Naive thymus-derived CD4-positive, alpha-beta T cell (primary cell): ENCODE measurements at regions of chr6 and their contacts with region 1.

Region 1: GRCh38 chr6:107786709-107787588 is 37.2 kb downstream of the SCML4 start:
- DNase-seq: peak in 7 of 9 donors; percentile 51 to 80 (median 65)
- ATAC-seq: peak; percentile 87
- H3K4me3 ChIP-seq: peak overlapping the region; percentile 34
- H3K4me3 Mint-ChIP-seq: peak overlapping the region; percentile 74 to 88 (median 82)
- H3K27ac ChIP-seq: peak overlapping the region; percentile 70
- H3K27ac Mint-ChIP-seq: peak overlapping the region; percentile 83 to 97 (median 95)
- H3K4me1 ChIP-seq: peaks cover 51 to 78% of the 10 kb centered on the region in 2 donors
- H3K4me1 Mint-ChIP-seq: peaks cover 65 to 92% (median 90%) of the 10 kb centered on the region in 7 donors
- H3K27me3 ChIP-seq: no peaks in the 10 kb centered on the region
- H3K27me3 Mint-ChIP-seq: peaks cover 0 to 6% (median 0%) of the 10 kb centered on the region in 5 donors

Region 2: GRCh38 chr6:107740496-107741190 is 46.3 kb before region 1 on chr6:
- CTCF ChIA-PET with region 1: interaction called, 5 read pairs
- POLR2A ChIA-PET with region 1: interaction called, 140 read pairs
- intact Hi-C with region 1: loop called (anchors 1 kb)
- DNase-seq: peak in 7 of 9 donors; percentile 35 to 48 (median 42)
- ATAC-seq: peak; percentile 43
- H3K4me3 ChIP-seq: peak overlapping the region; percentile 48
- H3K4me3 Mint-ChIP-seq: peak overlapping the region; percentile 72 to 90 (median 82)
- H3K27ac ChIP-seq: peak overlapping the region; percentile 73
- H3K27ac Mint-ChIP-seq: peak overlapping the region; percentile 85 to 98 (median 95)
- H3K4me1 ChIP-seq: peaks cover 54 to 65% of the 10 kb centered on the region in 2 donors
- H3K4me1 Mint-ChIP-seq: peaks cover 47 to 92% (median 86%) of the 10 kb centered on the region in 7 donors
- H3K27me3 ChIP-seq: no peaks in the 10 kb centered on the region
- H3K27me3 Mint-ChIP-seq: no peaks in the 10 kb centered on the region

Region 3: DNA sequence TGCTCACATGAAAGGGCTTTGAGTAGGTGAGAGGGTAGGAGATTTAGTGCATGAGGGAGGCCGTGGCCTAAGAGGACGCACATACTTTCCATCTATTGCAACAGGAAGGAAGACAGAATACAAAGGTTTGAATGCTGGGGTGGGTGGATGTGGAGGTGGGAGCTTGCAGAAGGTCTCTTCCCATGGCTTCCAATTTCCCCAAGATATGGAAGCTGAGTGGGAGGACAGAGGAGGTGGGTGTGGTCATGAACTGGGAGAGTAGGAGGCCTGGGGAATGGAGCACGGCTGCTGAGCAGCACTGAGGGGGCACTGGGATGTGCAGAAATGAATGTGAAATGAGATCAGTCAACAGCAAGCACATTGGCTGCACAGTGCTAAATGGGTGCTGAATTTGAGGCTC is 33.2 kb before region 1 on chr6:
- CTCF ChIA-PET with region 1: interaction called, 3 read pairs
- POLR2A ChIA-PET with region 1: interaction called, 20 read pairs
- intact Hi-C with region 1: no loop called
- DNase-seq: peak in 2 of 9 donors; percentile 6 to 12
- ATAC-seq: no peak
- H3K4me3 ChIP-seq: no peak overlapping the region
- H3K4me3 Mint-ChIP-seq: peak overlapping the region; percentile 3 to 76 (median 57)
- H3K27ac ChIP-seq: no peak overlapping the region
- H3K27ac Mint-ChIP-seq: peak overlapping the region in 8 of 9 donors; percentile 66 to 90 (median 84)
- H3K4me1 ChIP-seq: peaks cover 21 to 25% of the 10 kb centered on the region in 2 donors
- H3K4me1 Mint-ChIP-seq: peaks cover 33 to 93% (median 84%) of the 10 kb centered on the region in 7 donors
- H3K27me3 ChIP-seq: no peaks in the 10 kb centered on the region
- H3K27me3 Mint-ChIP-seq: no peaks in the 10 kb centered on the region

Region 4: GRCh38 chr6:107770541-107770940 is 16.4 kb before region 1 on chr6:
- CTCF ChIA-PET with region 1: interaction called, 3 read pairs
- POLR2A ChIA-PET with region 1: interaction called, 8 read pairs
- intact Hi-C with region 1: loop called in 1 of 2 experiments (anchors 2 kb)
- DNase-seq: no peak
- ATAC-seq: no peak
- H3K4me3 ChIP-seq: no peak overlapping the region
- H3K4me3 Mint-ChIP-seq: peak overlapping the region in 1 of 10 donors; percentile 12
- H3K27ac ChIP-seq: no peak overlapping the region
- H3K27ac Mint-ChIP-seq: peak overlapping the region in 3 of 9 donors; percentile 31 to 63 (median 50)
- H3K4me1 ChIP-seq: peaks cover 0 to 5% of the 10 kb centered on the region in 2 donors
- H3K4me1 Mint-ChIP-seq: peaks cover 0 to 77% (median 49%) of the 10 kb centered on the region in 7 donors
- H3K27me3 ChIP-seq: no peaks in the 10 kb centered on the region
- H3K27me3 Mint-ChIP-seq: no peaks in the 10 kb centered on the region

Region 5: DNA sequence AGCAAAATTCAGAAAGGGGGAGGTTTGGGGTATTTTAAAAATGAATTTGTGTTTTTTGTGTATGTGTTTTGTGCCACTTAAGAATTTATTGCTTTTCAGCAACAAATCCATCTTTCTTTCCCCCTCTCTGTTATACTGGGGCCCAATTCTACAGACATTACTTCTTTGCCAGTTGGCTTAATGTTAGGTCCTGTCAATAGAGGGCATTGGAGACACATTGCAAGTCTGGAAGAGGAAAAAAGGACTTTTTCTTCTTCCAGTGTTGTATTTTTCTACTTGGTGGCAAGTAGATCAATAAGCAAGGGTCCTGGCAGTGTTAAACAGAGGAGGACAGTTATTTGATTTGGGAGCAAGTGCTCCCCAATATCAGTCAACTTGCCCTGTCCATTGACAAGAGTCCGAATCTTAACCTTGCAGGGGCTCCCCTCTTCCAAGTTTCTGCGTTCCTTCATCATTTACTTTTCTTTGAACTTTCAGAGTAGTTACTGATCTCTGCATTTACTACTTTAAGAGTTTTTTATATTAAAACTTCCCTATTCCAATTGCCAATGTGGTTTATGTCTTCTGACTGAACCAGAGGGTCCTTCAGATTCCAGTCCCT is 13.7 kb after region 1 on chr6:
- CTCF ChIA-PET with region 1: interaction called, 4 read pairs
- POLR2A ChIA-PET with region 1: interaction called, 15 read pairs
- intact Hi-C with region 1: loop called in 1 of 2 experiments (anchors 1 kb)
- DNase-seq: peak in 4 of 9 donors; percentile 28 to 53 (median 42)
- ATAC-seq: peak; percentile 75
- H3K4me3 ChIP-seq: no peak overlapping the region
- H3K4me3 Mint-ChIP-seq: peak overlapping the region in 2 of 10 donors; percentile 33 to 43
- H3K27ac ChIP-seq: no peak overlapping the region
- H3K27ac Mint-ChIP-seq: peak overlapping the region in 8 of 9 donors; percentile 53 to 96 (median 90)
- H3K4me1 ChIP-seq: peaks cover 10 to 34% of the 10 kb centered on the region in 2 donors
- H3K4me1 Mint-ChIP-seq: peaks cover 17 to 87% (median 81%) of the 10 kb centered on the region in 7 donors
- H3K27me3 ChIP-seq: no peaks in the 10 kb centered on the region
- H3K27me3 Mint-ChIP-seq: peaks cover 0 to 9% (median 0%) of the 10 kb centered on the region in 5 donors

Region 6: GRCh38 chr6:108365478-108365877 is 578.5 kb after region 1 on chr6:
- CTCF ChIA-PET with region 1: no interaction called
- POLR2A ChIA-PET with region 1: no interaction called
- intact Hi-C with region 1: no loop called
- DNase-seq: no peak
- ATAC-seq: no peak
- H3K4me3 ChIP-seq: no peak overlapping the region
- H3K4me3 Mint-ChIP-seq: no peak overlapping the region
- H3K27ac ChIP-seq: no peak overlapping the region
- H3K27ac Mint-ChIP-seq: no peak overlapping the region
- H3K4me1 ChIP-seq: no peaks in the 10 kb centered on the region
- H3K4me1 Mint-ChIP-seq: peaks cover 0 to 3% (median 0%) of the 10 kb centered on the region in 7 donors
- H3K27me3 ChIP-seq: no peaks in the 10 kb centered on the region
- H3K27me3 Mint-ChIP-seq: peaks cover 0 to 5% (median 0%) of the 10 kb centered on the region in 5 donors